Ascending aorta (tissue), 2 donors: ENCODE measurements at regions of chr21 and their contacts with region 1.

Region 1: DNA sequence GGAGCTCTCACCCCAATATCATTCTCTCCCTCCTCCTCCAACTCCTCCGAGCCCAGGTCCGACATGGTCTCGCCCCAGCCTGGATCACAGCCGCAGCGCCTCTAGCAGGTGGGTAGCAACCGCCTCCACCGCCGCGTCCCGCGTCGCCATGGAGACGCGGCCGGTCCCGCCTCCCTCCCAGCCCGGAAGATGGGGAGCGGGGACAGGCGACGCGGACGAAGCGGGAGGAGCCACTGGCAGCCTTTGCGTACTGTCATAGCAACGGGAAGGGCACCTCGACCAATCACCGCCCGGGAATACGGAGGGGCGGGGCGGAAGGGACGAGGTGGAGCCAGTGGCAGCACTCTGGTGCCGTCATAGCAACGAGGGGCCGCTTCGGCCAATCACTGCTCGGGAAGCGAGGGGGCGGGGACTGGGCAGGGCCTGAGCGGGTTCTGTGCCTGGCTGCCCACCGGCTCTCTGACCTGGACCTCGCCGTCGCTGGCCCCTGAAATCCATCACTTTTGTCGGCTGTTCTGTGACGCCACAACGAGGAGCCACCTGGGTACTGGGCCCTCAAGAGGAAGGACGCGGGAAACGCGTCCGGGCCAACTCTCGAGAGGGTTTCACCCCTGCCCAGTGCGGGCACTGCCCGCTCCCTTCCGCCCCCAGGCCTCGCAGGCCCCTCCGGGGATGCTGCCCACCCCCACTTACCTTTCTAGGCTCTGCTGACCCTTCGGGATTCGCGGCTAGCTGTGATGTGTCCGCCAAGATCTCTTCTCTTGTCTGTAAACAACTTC is at the start of gene RSPH1:
- DNase-seq: peak; percentile 98 to 100
- H3K4me3 ChIP-seq: peak within 1 kb of the TSS; percentile 76 to 77
- H3K27ac ChIP-seq: peak within 1 kb of the TSS; percentile 64 to 76
- H3K4me1 ChIP-seq: no peaks in the 10 kb centered on the region
- H3K27me3 ChIP-seq: no peaks in the 10 kb centered on the region
- CTCF ChIP-seq: no peak
- total RNA-seq, gene RSPH1: not detected

Region 2: GRCh38 chr21:41167348-41168342 is 1328.7 kb before region 1 on chr21 and contains the start of gene BACE2:
- intact Hi-C with region 1: loop called (anchors 10 kb)
- DNase-seq: peak in 1 of 2 donors; percentile 91
- H3K4me3 ChIP-seq: peak within 1 kb of the TSS; percentile 92 to 99
- H3K27ac ChIP-seq: peak within 1 kb of the TSS; percentile 98 to 99
- H3K4me1 ChIP-seq: peaks cover 0 to 17% of the 10 kb centered on the region in 2 donors
- H3K27me3 ChIP-seq: no peaks in the 10 kb centered on the region
- CTCF ChIP-seq: peak; percentile 29 to 68 (median 60)
- total RNA-seq, gene BACE2: 151 TPM

Region 3: DNA sequence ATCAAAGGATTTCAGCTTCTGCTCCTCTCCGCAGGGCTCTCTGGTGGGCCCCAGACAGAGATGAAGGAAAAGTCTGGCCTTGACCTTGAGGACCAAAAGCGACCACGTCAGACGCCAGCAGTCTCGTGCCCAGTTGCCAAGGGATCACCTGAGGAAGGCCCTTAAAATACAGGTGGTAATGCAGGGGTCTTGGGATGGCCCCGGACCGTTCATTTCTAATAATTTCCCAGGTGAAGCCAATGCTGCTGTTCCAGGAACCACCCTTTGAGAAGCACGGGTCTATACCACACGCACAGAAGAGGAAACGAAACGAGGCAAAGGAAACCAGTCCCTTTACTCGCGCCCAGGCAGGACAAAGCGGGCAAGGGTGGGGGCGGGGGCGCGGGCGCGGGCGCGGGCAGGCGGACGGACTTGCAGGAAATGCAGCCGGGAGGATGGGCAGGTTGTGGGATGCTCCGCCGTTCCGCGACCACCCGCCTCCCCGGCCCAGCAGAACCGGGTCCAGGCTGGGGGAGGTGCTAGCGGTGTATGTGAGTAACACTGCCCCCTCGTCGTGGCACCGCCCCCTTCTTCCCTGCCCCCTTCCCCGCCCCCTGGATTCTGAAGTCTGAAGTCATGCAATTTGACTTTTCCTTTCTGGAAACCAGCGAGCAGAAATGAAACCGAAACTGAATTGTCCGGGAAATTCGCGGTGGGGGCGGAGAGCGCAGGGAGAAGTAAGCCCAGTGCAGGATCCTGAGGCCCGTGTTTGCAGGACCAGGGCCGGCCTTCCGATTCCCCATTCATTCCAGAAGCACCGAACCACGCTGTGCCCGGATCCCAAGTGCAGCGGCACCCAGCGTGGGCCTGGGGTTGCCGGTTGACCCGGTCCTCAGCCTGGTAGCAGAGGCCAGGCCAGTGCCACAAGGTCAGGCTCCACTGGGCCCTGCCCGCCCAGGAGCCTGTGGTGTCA is 1076.1 kb before region 1 on chr21:
- intact Hi-C with region 1: loop called (anchors 10 kb)
- DNase-seq: peak; percentile 53 to 93
- H3K4me3 ChIP-seq: peak overlapping the region; percentile 79 to 82
- H3K27ac ChIP-seq: peak overlapping the region; percentile 83 to 88
- H3K4me1 ChIP-seq: no peaks in the 10 kb centered on the region
- H3K27me3 ChIP-seq: no peaks in the 10 kb centered on the region
- CTCF ChIP-seq: no peak

Region 4: GRCh38 chr21:42513985-42514882 is 17.9 kb after region 1 on chr21:
- intact Hi-C with region 1: loop called (anchors 2 kb)
- DNase-seq: peak in 1 of 2 donors; percentile 69
- H3K4me3 ChIP-seq: peak overlapping the region; percentile 73 to 98
- H3K27ac ChIP-seq: peak overlapping the region; percentile 58 to 74
- H3K4me1 ChIP-seq: peaks cover 4 to 5% of the 10 kb centered on the region in 2 donors
- H3K27me3 ChIP-seq: no peaks in the 10 kb centered on the region
- CTCF ChIP-seq: no peak

Region 5: GRCh38 chr21:42524349-42525151 is 28.2 kb after region 1 on chr21:
- intact Hi-C with region 1: loop called (anchors 1 kb)
- DNase-seq: peak in 1 of 2 donors; percentile 88
- H3K4me3 ChIP-seq: peak overlapping the region; percentile 42 to 56
- H3K27ac ChIP-seq: peak overlapping the region; percentile 47 to 63
- H3K4me1 ChIP-seq: peaks cover 3 to 6% of the 10 kb centered on the region in 2 donors
- H3K27me3 ChIP-seq: no peaks in the 10 kb centered on the region
- CTCF ChIP-seq: no peak

Region 6: GRCh38 chr21:42790520-42791065 is 294.3 kb after region 1 on chr21:
- intact Hi-C with region 1: no loop called
- DNase-seq: no peak
- H3K4me3 ChIP-seq: no peak overlapping the region
- H3K27ac ChIP-seq: no peak overlapping the region
- H3K4me1 ChIP-seq: no peaks in the 10 kb centered on the region
- H3K27me3 ChIP-seq: no peaks in the 10 kb centered on the region
- CTCF ChIP-seq: no peak

Region 7: DNA sequence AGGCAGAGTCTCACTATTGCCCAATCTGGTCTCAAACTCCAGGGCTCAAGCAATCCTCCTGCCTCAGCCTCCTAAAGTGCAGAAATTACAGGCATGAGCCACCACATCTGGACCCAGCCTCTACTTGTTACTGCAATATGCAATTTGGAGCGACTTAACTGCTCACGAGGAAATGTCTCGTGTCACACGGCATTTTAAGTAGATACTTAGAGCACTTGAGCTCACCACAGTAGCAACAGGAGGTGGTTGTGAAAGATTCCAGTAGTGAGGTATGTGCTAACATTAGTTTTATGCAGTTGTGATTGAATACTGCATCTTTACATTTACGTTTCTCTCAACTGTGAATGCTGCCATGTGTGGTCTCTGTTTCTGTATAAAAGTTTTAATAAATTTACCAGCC is 391.0 kb after region 1 on chr21:
- intact Hi-C with region 1: loop called (anchors 10 kb)
- DNase-seq: no peak
- H3K4me3 ChIP-seq: no peak overlapping the region
- H3K27ac ChIP-seq: no peak overlapping the region
- H3K4me1 ChIP-seq: no peaks in the 10 kb centered on the region
- H3K27me3 ChIP-seq: no peaks in the 10 kb centered on the region
- CTCF ChIP-seq: no peak